Activated B cell treated with CpG ODN at 0.5 μM for 24 hours (primary cell): ENCODE measurements at regions of chr6 and their contacts with region 1.

Region 1: DNA sequence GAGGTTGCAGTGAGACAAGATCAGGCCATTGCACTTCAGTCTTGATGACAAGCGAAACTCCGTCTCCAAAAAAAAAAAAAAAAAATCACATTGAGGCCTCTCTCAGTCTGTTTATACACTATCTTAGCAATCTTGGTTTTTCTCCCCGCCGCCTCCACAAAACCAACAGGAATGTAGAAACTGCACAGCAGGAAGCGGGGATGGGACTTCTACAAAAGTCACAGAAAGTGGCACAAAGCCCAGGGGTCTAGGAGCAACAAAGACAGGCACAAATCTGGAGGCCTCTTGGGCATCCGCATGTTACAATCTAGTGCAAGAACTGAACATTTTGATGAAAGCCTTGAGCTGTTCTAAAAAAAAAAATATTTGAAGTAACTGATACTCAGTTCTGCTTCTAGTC is 48.6 kb downstream of the KDM1B start:
- DNase-seq: no peak
- ATAC-seq: no peak
- H3K4me3 Mint-ChIP-seq: no peak overlapping the region
- H3K27ac Mint-ChIP-seq: no peak overlapping the region
- H3K4me1 Mint-ChIP-seq: no peaks in the 10 kb centered on the region
- H3K27me3 Mint-ChIP-seq: no peaks in the 10 kb centered on the region
- CTCF ChIP-seq: no peak

Region 2: DNA sequence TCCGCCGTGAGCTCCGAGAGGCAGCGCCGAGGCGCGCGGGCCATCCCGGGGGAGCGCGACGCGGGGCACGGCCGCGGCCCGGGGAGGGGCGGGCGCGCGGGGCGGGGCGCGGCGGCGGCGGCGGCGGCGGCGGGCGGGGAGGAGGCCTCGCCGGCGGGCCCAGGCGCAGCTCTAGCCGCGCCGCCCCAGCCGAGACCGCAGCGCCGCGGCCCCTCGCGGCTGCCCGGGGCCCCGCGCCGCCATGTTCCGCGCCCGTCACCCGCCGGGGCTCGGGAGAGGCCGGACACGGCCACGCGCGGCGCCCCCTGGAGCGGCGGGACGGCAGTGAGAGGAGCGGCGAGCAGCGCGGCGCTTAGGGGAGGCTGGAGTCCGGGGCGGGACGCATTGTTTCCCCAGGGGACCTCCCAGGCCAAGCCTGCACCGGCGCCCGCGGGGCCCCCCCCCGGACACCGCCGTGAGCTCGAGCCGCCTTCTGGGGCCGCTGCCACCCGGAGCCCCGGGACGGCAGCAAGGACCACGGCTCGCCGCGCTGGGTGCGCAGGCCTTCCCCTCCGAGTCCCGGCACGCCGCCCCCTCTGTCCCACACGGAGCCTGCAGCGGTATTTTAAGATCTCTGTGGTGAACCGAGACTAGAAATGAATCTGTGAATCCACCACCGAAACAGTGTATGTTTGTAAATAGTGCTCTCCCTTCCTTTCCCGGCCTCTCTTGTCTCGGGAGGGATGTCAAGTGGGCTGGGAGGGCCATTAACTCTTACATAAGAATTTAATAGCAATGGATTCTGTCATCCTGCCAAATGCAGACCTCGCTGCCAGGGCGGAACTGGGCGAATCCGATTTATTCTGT is 216.0 kb before region 1 on chr6 and contains the start of gene KIF13A:
- CTCF ChIA-PET with region 1: no interaction called
- POLR2A ChIA-PET with region 1: no interaction called
- intact Hi-C with region 1: no loop called
- DNase-seq: peak; percentile 72
- ATAC-seq: peak; percentile 76
- H3K4me3 Mint-ChIP-seq: peak within 1 kb of the TSS; percentile 91
- H3K27ac Mint-ChIP-seq: peak within 1 kb of the TSS; percentile 88
- H3K4me1 Mint-ChIP-seq: peaks cover 32% of the 10 kb centered on the region
- H3K27me3 Mint-ChIP-seq: no peaks in the 10 kb centered on the region
- CTCF ChIP-seq: no peak
- total RNA-seq, gene KIF13A: 13.1 and 14.1 TPM in 2 replicates

Region 3: GRCh38 chr6:18216411-18216810 is 12.6 kb after region 1 on chr6:
- CTCF ChIA-PET with region 1: interaction called, 3 read pairs
- POLR2A ChIA-PET with region 1: interaction called, 10 read pairs
- intact Hi-C with region 1: no loop called
- DNase-seq: no peak
- ATAC-seq: no peak
- H3K4me3 Mint-ChIP-seq: no peak overlapping the region
- H3K27ac Mint-ChIP-seq: no peak overlapping the region
- H3K4me1 Mint-ChIP-seq: peaks cover 28% of the 10 kb centered on the region
- H3K27me3 Mint-ChIP-seq: no peaks in the 10 kb centered on the region
- CTCF ChIP-seq: no peak

Region 4: DNA sequence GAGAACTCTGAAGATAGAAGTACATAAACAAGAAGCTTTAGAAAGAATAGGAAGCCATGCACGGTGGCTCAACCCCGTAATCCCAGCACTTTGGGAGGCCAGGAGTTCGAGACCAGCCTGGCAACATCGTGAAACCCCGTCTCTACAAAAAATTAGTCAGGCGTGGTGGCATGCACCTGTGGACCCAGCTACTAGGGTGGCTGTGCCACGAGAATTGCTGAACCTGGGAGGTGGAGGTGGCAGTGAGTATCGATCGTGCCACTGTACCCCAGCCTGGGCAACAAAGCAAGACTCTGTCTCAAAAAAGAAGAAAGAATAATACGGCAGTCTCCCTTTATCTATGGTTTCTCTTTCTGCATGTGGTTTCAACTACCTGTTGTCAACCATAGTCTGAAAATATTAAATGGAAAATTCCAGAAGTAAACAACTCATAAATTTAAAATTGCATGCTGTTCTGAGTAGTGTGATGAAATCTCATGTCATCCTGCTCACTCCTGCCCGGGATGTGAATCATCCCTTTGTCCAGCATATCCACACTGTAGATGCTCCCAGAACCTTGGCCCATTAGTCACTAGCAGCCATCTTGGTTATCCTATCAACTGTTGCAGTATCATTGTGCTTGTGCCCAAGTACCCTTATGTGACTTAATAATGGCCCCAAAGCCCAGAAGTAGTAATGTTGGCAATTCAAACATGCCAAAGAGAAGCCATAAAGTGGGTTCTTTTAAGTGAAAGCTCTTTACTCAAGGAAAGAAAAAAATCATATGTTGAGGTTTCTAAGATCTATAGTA is 38.5 kb after region 1 on chr6:
- CTCF ChIA-PET with region 1: no interaction called
- POLR2A ChIA-PET with region 1: no interaction called
- intact Hi-C with region 1: no loop called
- DNase-seq: no peak
- ATAC-seq: no peak
- H3K4me3 Mint-ChIP-seq: no peak overlapping the region
- H3K27ac Mint-ChIP-seq: no peak overlapping the region
- H3K4me1 Mint-ChIP-seq: peaks cover 8% of the 10 kb centered on the region
- H3K27me3 Mint-ChIP-seq: no peaks in the 10 kb centered on the region
- CTCF ChIP-seq: no peak

Region 5: DNA sequence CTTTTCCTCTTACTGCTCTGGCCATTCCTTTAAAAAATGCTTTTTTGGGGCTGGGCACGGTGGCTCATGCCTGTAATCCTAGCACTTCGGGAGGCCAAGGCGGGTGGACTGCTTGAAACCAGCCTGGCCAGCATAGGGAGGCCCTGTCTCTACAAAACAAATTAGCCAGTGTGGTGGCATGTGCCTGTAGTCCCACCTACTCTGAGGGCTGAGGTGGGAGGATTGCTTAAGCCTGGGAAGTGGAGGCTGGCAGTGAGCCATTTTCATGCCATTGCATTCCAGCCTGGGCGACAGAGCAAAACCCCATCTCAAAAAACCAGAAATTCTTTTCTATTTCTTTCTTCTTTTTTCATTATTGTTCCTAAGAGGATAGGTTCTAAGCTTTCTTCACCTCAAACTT is 146.5 kb after region 1 on chr6:
- CTCF ChIA-PET with region 1: no interaction called
- POLR2A ChIA-PET with region 1: no interaction called
- intact Hi-C with region 1: no loop called
- DNase-seq: no peak
- ATAC-seq: no peak
- H3K4me3 Mint-ChIP-seq: no peak overlapping the region
- H3K27ac Mint-ChIP-seq: peak overlapping the region; percentile 62
- H3K4me1 Mint-ChIP-seq: peaks cover 24% of the 10 kb centered on the region
- H3K27me3 Mint-ChIP-seq: no peaks in the 10 kb centered on the region
- CTCF ChIP-seq: no peak

Region 6: DNA sequence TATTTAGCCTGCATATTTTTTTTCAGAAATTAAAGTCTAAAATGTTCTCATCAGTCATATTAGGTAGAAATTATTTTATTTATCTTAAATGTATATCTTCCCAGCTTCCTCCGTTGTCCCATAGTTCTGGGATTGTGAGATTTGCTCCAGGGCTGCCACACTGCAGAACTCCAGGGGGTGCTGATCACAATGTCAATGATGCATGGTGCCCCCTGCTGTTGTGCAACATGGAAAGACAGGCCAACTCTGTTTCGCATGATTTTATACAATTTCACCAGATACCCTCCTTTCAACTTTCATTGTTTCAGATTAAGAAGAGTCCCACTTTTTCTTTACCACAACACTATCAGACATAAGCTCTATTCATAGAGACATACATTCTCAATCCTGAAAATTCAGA is 1669.2 kb after region 1 on chr6:
- CTCF ChIA-PET with region 1: no interaction called
- POLR2A ChIA-PET with region 1: no interaction called
- intact Hi-C with region 1: no loop called
- DNase-seq: no peak
- ATAC-seq: no peak
- H3K4me3 Mint-ChIP-seq: no peak overlapping the region
- H3K27ac Mint-ChIP-seq: no peak overlapping the region
- H3K4me1 Mint-ChIP-seq: no peaks in the 10 kb centered on the region
- H3K27me3 Mint-ChIP-seq: no peaks in the 10 kb centered on the region
- CTCF ChIP-seq: no peak